Ascending aorta (tissue), 2 donors: ENCODE measurements at regions of chr15 and their contacts with region 1.

Region 1: DNA sequence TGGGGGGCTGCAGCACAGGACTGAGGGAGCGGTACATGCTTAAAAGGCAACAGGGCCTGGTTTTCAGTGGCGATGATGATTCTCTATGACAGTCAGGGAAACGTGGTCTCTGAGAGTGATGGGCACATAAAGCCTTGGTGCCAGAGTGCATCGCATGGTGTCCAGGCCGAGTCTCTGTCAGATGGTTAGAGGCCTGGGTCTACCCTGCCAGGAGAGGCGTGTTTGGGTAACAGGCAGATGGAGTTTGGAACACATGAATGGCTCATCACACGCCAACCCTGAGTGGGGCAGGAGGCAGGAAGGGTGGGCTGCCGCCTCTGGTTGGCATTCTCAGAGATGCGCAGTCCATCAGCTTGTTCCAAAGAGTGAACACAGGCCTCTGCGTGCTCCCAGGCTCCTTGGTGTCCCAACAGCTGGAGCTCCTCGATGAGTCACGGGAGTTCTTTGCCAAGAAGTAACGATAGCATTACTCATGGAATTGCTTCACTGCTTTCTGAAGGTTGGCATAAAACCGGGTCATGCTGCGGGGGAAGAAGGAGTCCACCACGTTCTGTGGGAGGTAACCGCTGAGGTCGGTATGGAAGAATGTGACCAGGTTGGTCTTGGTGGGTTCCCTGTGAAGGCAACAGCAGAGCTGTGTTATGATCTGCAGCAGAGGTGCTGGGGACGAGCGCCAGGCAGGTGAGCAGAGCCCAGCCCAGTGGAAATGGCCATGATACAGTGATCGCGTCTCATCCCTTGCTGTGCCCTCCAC is 11.0 kb downstream of the STARD5 start:
- DNase-seq: peak; percentile 75 to 95
- H3K4me3 ChIP-seq: no peak overlapping the region
- H3K27ac ChIP-seq: peak overlapping the region; percentile 55 to 69
- H3K4me1 ChIP-seq: peaks cover 12 to 18% of the 10 kb centered on the region in 2 donors
- H3K27me3 ChIP-seq: no peaks in the 10 kb centered on the region
- CTCF ChIP-seq: no peak

Region 2: GRCh38 chr15:81274931-81275707 is 37.8 kb before region 1 on chr15:
- intact Hi-C with region 1: loop called (anchors 2 kb)
- DNase-seq: peak in 1 of 2 donors; percentile 78
- H3K4me3 ChIP-seq: no peak overlapping the region
- H3K27ac ChIP-seq: peak overlapping the region; percentile 3 to 36
- H3K4me1 ChIP-seq: peaks cover 0 to 8% of the 10 kb centered on the region in 2 donors
- H3K27me3 ChIP-seq: no peaks in the 10 kb centered on the region
- CTCF ChIP-seq: peak; percentile 71 to 87 (median 77)

Region 3: DNA sequence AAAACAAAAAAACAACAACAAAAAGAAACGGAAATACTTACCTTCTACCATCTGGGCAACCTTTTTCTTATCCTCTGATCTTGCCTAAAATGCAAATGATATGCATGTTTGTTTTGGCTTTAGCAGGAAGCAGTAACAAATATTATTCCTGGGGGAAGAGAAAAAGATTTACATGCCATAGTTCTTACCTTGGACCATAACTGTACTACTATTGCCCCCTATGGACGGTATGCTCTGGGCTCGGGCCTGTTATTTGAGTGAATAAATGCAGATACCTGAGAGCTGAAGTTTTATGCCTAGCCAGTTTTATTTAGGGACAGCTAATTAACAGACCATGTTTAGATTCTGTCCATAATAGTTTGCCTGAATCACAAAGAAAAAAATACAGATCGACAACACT is 23.6 kb after region 1 on chr15:
- intact Hi-C with region 1: loop called (anchors 1 kb)
- DNase-seq: no peak
- H3K4me3 ChIP-seq: no peak overlapping the region
- H3K27ac ChIP-seq: no peak overlapping the region
- H3K4me1 ChIP-seq: peaks cover 14% of the 10 kb centered on the region in 2 donors
- H3K27me3 ChIP-seq: no peaks in the 10 kb centered on the region
- CTCF ChIP-seq: peak in 1 of 3 experiments; percentile 12

Region 4: GRCh38 chr15:81351651-81352050 is 38.7 kb after region 1 on chr15:
- intact Hi-C with region 1: no loop called
- DNase-seq: no peak
- H3K4me3 ChIP-seq: no peak overlapping the region
- H3K27ac ChIP-seq: no peak overlapping the region
- H3K4me1 ChIP-seq: no peaks in the 10 kb centered on the region
- H3K27me3 ChIP-seq: no peaks in the 10 kb centered on the region
- CTCF ChIP-seq: no peak